ENCODE measurements at regions of chr4 and their contacts with region 1.

Region 1: GRCh38 chr4:88659055-88659889 is 38.4 kb downstream of the NAP1L5 start:
- DNase-seq: peak; percentile 79
- H3K4me3 Mint-ChIP-seq: no peak overlapping the region
- H3K27ac Mint-ChIP-seq: peak overlapping the region; percentile 50
- H3K4me1 Mint-ChIP-seq: peaks cover 15% of the 10 kb centered on the region
- H3K27me3 Mint-ChIP-seq: no peaks in the 10 kb centered on the region
- CTCF ChIP-seq: peak; percentile 76

Region 2: DNA sequence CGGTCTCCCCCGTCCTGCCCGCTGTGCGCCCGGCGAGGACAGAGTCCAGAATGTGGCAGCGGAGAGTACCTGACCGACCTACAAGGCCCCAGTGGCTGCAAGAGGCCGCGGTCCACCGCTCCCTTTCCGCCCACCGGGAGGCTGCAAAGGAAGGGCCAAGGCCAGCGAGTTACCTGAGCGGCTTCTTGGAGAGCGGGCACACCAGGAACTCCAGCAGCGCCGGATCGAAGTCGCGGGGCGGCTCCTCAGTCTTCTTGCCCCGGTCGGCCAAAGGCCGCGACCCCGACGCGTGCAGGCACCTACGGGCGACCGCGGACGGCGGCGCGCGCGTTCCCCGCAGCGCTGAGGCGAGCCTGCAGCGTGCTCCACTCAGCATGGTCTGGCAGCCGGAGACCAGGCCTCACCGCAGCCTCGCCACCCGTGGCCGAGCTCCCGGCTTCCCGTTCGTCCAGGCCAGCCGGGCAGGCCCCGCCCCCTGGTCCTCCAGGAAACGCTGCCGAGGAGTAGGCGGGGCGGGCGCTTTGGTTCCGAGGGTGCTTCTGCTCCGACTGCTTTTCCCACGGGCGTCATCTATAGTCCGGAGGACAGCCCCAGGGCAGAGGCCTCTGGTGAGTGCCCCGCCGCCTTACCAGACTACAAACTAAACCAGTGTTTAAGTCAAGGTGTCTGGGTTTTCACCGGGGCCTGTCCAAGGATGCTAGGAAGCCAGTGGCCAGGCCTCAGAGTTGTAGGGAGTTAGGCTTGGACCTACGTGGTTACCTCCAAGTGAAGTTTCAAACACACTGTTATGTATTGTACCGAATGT is 135.7 kb before region 1 on chr4 and contains the start of gene PYURF:
- CTCF ChIA-PET with region 1: interaction called, 35 read pairs
- POLR2A ChIA-PET with region 1: interaction called, 22 read pairs
- intact Hi-C with region 1: no loop called
- DNase-seq: peak; percentile 93
- H3K4me3 Mint-ChIP-seq: peak within 1 kb of the TSS; percentile 97
- H3K27ac Mint-ChIP-seq: peak within 1 kb of the TSS; percentile 89
- H3K4me1 Mint-ChIP-seq: peaks cover 14% of the 10 kb centered on the region
- H3K27me3 Mint-ChIP-seq: no peaks in the 10 kb centered on the region
- CTCF ChIP-seq: no peak
- total RNA-seq, gene PYURF: 80.9 and 82.5 TPM in 2 replicates

Region 3: DNA sequence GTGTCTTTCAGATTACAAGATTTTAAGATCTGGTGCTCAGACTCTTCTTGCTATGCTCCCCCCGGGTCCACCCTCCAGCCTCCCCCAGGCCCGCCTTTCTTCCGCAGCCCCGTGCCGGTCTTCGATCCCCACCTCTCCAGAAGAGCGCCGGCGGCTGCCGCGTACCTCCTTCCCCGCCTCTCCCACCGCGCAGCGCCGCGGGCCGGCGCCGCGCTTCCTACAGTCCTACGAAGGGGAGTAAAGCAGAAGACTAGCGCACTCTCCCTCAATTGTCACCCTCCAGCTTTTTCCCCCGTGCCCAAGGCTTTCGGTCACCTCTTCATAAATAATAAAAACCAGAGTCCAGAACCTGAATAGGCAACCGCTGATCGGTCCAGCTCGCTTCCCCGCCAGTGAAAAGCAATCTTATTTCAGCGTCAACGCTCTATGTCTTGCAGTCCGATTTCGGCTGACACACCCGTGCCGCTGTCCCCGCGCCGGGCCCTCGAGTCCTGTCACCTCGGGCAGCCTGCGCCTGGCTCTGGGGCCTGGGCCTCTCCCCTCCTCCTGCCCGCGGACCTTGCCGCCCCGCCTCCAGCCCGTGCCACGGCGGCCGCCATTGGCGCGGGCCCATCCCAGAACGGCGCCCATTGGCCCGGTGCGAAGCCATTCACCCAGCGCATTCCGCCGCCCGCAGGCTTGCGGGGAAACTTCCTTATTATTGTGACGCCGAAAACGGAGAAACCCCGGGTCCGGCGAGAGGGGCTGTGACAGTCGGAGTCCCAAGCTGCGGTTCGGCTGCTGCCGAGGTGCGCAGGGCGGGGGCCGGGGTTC is 67.3 kb before region 1 on chr4 and contains the start of gene HERC3:
- CTCF ChIA-PET with region 1: interaction called, 8 read pairs
- POLR2A ChIA-PET with region 1: interaction called, 29 read pairs
- intact Hi-C with region 1: loop called (anchors 1 kb)
- DNase-seq: peak; percentile 89
- H3K4me3 Mint-ChIP-seq: peak within 1 kb of the TSS; percentile 83
- H3K27ac Mint-ChIP-seq: peak within 1 kb of the TSS; percentile 77
- H3K4me1 Mint-ChIP-seq: peaks cover 6% of the 10 kb centered on the region
- H3K27me3 Mint-ChIP-seq: no peaks in the 10 kb centered on the region
- CTCF ChIP-seq: no peak
- total RNA-seq, gene HERC3: 34.9 and 64.0 TPM in 2 replicates

Region 4: DNA sequence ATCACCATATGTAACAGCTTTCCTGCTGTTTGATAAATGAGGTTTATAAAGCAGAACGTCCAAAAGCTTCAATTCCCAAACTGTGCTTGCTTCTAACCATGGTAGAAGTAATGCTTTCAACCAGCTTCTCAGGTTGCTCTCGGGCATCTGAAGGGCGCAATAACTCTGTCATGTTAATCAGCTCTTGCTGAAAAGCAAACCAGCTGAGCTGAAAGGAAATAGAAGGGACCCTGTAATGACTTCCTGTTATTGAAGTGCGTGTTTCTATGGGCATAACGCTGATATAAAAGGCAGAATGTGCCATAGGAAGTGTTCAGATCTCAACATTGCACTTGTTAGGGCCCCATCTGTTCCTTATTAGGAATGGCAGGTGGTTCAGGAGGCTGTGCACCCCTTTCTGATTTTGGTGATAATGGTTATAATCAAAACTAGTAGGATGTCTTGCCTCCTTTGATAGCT is 45.8 kb before region 1 on chr4:
- CTCF ChIA-PET with region 1: interaction called, 9 read pairs
- POLR2A ChIA-PET with region 1: interaction called, 8 read pairs
- intact Hi-C with region 1: loop called (anchors 5 kb)
- DNase-seq: no peak
- H3K4me3 Mint-ChIP-seq: no peak overlapping the region
- H3K27ac Mint-ChIP-seq: peak overlapping the region; percentile 59
- H3K4me1 Mint-ChIP-seq: peaks cover 56% of the 10 kb centered on the region
- H3K27me3 Mint-ChIP-seq: no peaks in the 10 kb centered on the region
- CTCF ChIP-seq: no peak

Region 5: GRCh38 chr4:88628759-88629158 is 30.5 kb before region 1 on chr4:
- CTCF ChIA-PET with region 1: interaction called, 15 read pairs
- POLR2A ChIA-PET with region 1: interaction called, 5 read pairs
- intact Hi-C with region 1: no loop called
- DNase-seq: peak; percentile 84
- H3K4me3 Mint-ChIP-seq: peak overlapping the region; percentile 35
- H3K27ac Mint-ChIP-seq: peak overlapping the region; percentile 91
- H3K4me1 Mint-ChIP-seq: peaks cover 19% of the 10 kb centered on the region
- H3K27me3 Mint-ChIP-seq: no peaks in the 10 kb centered on the region
- CTCF ChIP-seq: peak; percentile 17

Region 6: GRCh38 chr4:88672987-88673386 is 13.7 kb after region 1 on chr4:
- CTCF ChIA-PET with region 1: interaction called, 13 read pairs
- POLR2A ChIA-PET with region 1: interaction called, 4 read pairs
- intact Hi-C with region 1: no loop called
- DNase-seq: peak; percentile 33
- H3K4me3 Mint-ChIP-seq: no peak overlapping the region
- H3K27ac Mint-ChIP-seq: no peak overlapping the region
- H3K4me1 Mint-ChIP-seq: no peaks in the 10 kb centered on the region
- H3K27me3 Mint-ChIP-seq: no peaks in the 10 kb centered on the region
- CTCF ChIP-seq: peak; percentile 21

Measured in MCF 10A (cell line).